Activated T-helper 2 cell treated with anti-CD3 and anti-CD28 coated beads, Interferon-gamma antibody, Interleukin-2, Interleukin-4, amounts not matched to agents 10 μg/mL and 5 μg/mL and 100 μg/mL, durations not matched to agents 14 hours and 24 hours and 36 hours (primary cell): ENCODE measurements at regions of chr3 and their contacts with region 1.

Region 1: DNA sequence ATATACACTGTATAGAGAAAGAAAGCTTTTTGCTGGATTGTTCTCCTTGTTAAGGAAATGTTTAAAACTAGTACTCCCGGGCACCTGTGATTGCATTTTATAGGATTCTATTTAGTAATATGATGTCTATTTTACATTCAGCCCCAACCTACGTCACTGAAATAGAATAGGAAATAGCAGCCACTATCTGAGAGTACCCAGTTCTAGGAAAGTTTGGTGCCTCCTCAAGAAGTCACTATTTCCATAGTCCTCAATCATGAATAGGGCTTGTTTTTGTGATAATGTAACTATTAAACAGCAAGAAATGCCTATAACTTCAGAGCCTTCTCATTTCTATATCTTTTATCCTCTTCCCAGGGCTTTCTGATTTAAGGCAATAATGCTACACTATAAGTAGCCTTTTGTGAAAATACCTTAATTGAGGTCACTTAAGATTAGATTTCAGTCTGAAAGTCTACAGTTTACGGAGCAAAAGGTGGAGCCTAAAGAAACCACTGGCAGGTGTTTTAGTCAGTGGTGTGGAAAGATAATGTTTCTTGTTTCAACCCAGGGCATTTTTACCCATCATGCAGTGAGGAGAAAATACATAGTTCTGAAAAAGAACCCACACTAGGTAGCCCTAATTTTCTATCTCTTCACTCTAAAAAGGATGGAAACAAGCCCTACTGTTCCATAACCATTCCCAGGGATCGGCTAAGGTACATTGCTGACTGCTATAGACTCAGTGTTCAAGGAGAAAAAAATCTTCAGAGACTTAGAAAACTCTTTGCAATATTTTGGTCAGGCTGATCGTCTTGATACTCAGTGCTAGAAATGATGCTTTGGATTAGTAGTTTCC is 38.7 kb downstream of the TIGIT start:
- DNase-seq: no peak
- H3K4me3 Mint-ChIP-seq: no peak overlapping the region
- H3K27ac Mint-ChIP-seq: peak overlapping the region; percentile 80
- H3K4me1 Mint-ChIP-seq: peaks cover 64% of the 10 kb centered on the region
- H3K27me3 Mint-ChIP-seq: no peaks in the 10 kb centered on the region

Region 2: DNA sequence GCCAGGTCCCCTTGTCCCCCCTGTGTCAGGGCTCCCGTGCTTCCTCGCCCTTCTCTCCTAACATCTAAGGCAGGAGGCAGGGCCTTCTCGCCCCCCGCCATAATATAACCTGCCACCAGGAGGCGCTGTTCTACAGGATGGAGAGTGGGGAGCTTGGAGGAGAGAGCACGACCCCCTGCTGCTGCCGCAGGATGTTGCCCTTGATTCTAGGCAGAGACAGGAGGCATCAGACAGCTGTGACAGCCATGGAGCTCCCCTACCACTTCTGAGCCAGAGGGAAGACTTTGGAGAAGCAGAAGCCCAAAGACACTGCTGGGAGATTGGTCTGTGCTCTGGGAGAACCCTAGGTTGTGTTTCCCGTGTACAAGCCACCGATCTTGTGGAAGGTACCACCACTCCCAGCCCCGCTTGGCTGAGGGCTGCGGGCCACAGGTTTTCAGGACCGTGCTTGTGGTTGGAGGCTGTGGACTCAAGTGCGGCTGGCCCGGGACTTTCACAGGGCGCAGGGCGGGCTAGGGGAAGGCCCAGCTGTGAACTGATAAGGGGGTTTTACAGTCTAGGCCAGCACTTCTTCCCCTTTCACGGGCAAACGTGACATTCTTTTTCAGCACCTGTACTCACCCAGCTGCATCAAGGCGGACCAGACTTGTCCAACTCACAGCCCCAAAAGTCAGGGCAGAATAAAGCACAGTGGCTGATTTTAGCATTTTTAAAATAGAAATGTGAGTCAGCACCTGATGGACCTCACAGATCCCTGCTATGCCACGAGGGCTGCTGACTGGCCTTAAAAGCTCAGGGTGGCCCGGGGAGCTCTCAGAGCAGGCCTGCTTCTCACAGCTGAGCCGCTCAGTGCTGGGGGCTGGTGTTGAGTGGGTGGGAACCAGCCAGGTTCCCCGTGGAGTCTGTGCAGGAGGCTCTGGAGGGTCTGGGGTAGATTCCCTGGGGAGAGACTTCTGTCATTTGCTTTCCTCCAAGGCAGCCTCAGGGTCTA is 41.4 kb before region 1 on chr3:
- intact Hi-C with region 1: loop called (anchors 2 kb)
- DNase-seq: peak; percentile 69
- H3K4me3 Mint-ChIP-seq: peak overlapping the region; percentile 13
- H3K27ac Mint-ChIP-seq: peak overlapping the region; percentile 84
- H3K4me1 Mint-ChIP-seq: peaks cover 31% of the 10 kb centered on the region
- H3K27me3 Mint-ChIP-seq: no peaks in the 10 kb centered on the region

Region 3: DNA sequence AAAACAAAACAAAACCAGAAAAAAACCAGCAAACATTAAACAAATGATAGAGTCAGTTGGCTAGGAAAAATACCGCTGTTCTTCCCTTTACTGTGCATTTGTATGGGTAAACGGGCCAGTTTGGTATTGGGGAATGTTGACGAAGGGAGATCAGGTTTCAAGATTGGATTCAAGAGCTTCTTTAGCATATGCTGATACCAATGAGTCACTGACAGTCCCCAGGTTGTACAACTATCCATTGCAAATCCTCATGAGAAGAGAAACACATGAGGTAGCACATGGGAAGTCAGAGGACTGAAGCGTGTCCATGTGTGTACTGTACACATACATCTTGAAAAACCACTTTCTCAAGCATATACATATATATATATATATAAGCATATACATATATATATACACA is 13.1 kb before region 1 on chr3:
- intact Hi-C with region 1: loop called (anchors 1 kb)
- DNase-seq: no peak
- H3K4me3 Mint-ChIP-seq: no peak overlapping the region
- H3K27ac Mint-ChIP-seq: peak overlapping the region; percentile 1
- H3K4me1 Mint-ChIP-seq: peaks cover 60% of the 10 kb centered on the region
- H3K27me3 Mint-ChIP-seq: no peaks in the 10 kb centered on the region

Region 4: DNA sequence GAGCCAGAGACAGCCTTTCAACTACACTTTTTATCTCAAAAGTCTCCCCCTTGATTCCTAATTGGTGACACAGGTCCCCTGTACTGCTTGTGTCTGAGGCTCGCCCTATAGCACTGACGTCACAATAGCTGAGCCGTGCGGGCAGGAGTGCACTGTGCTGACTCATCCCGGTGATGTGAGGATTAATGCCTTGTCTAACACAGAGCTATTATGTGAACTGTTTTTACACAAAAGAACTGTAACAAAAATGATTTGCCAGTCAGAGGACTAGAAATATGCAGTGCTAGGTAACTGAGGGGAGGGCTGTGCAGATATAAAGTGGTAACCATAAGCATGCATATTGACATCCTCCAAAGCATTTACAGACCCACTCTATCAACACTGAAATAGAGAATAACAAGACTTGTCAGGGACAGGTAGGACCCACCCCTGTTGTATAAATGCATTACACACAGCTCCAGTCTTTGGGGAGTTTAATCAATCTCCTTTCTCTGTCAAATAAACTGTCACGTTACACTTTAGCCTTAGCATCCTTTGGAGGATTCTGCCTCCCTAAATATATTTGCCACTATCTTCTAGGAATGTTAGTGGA is 166.3 kb after region 1 on chr3:
- intact Hi-C with region 1: no loop called
- DNase-seq: no peak
- H3K4me3 Mint-ChIP-seq: no peak overlapping the region
- H3K27ac Mint-ChIP-seq: no peak overlapping the region
- H3K4me1 Mint-ChIP-seq: peaks cover 15% of the 10 kb centered on the region
- H3K27me3 Mint-ChIP-seq: peaks cover 15% of the 10 kb centered on the region